OCI-LY7 (cell line): ENCODE measurements at regions of chr3 and their contacts with region 1.

Region 1: DNA sequence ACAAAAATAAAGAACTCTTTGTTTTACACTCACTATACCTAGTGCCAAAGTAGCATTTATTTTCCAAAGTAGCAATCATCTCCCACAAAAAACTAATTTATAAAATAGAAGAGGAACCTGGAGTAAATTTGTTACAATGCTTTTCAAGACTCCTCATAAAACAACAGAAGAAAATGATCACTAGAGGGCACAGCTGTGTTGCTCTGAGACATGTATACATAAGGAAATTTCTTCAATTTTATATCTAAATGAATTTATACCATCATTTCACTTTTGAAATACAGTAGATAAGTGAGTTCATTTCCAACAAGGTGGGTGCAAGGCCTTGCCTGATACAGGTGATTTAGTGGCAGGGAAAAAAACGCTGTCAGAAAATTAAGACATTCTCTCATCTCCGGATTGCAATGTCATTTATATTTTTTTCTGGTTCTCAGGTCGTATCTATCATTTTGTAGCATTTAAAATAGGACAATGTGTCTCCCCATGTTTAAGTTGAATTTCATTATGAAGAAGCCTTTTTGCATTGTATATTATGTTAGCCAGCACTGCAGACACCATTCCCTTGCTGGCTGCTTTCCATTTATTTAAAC is 25.3 kb upstream of the ARHGEF26 start:
- DNase-seq: no peak
- H3K4me3 ChIP-seq: no peak overlapping the region
- H3K27ac ChIP-seq: no peak overlapping the region
- H3K4me1 ChIP-seq: no peaks in the 10 kb centered on the region
- CTCF ChIP-seq: peak; percentile 71

Region 2: DNA sequence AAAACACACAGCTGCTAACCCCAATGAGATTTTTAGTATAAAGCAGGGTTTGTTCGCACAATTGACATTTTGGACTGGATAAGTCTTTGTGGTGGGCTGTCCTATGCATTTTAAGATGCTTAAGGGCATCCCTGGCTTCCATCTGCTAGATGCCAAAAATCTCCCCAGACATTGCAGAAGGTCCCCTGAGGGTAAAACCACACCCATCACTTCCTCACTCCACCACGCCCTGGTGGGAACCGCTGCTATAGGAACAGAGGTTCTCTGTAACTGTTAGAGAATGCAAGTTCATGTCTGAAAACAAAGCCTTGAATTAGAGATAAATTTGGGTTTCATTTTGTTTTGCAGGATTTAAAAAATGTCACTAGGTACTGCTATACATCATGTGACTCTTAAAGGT is 92.9 kb after region 1 on chr3:
- CTCF ChIA-PET with region 1: no interaction called
- POLR2A ChIA-PET with region 1: no interaction called
- intact Hi-C with region 1: no loop called
- DNase-seq: no peak
- H3K4me3 ChIP-seq: no peak overlapping the region
- H3K27ac ChIP-seq: no peak overlapping the region
- H3K4me1 ChIP-seq: no peaks in the 10 kb centered on the region
- CTCF ChIP-seq: no peak

Region 3: DNA sequence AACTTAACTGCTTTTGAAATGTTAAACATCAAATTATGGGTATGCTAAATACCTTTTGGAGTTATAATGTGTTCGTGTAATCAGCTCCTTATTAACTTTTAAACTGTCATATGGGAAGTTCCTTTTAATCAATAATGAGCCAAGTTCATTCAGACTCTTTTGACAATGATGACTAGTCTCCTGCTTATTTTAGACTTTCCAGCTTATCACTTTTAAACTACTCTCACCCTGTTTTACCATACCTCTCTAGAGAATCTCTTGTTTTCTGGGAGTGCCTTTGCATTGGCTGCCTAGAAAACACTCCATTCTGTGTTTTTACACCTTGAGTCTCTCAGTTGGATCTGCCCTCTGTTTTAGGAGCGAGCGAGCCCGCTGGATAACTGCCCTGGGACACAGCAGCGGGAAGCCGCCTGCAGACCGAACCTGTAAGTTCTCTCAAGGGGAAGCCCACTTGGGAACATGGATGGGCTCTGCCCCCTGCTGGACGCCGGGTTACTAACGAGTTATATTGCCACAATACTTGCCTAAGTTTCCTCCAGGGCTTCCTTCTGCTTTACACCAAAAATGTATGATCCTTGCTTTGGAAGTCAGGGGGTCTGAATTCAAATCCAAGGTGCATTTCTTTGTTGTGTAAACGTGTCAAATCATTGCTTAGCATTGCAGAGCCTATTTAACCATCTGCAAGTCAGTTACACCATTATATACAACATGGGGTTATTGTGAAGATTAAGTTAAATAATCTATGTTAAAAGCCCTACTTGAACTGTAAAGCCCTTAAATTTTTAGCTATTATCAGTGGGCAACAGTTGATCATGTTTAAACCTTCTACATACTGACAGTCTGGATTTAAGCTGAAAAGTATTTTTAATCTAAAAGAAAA is 157.1 kb after region 1 on chr3:
- CTCF ChIA-PET with region 1: no interaction called
- POLR2A ChIA-PET with region 1: no interaction called
- intact Hi-C with region 1: loop called (anchors 5 kb)
- DNase-seq: peak; percentile 76
- H3K4me3 ChIP-seq: no peak overlapping the region
- H3K27ac ChIP-seq: no peak overlapping the region
- H3K4me1 ChIP-seq: no peaks in the 10 kb centered on the region
- CTCF ChIP-seq: peak; percentile 90